Heart left ventricle (tissue), 16 donors: ENCODE measurements at regions of chr19 and their contacts with region 1.

Region 1: DNA sequence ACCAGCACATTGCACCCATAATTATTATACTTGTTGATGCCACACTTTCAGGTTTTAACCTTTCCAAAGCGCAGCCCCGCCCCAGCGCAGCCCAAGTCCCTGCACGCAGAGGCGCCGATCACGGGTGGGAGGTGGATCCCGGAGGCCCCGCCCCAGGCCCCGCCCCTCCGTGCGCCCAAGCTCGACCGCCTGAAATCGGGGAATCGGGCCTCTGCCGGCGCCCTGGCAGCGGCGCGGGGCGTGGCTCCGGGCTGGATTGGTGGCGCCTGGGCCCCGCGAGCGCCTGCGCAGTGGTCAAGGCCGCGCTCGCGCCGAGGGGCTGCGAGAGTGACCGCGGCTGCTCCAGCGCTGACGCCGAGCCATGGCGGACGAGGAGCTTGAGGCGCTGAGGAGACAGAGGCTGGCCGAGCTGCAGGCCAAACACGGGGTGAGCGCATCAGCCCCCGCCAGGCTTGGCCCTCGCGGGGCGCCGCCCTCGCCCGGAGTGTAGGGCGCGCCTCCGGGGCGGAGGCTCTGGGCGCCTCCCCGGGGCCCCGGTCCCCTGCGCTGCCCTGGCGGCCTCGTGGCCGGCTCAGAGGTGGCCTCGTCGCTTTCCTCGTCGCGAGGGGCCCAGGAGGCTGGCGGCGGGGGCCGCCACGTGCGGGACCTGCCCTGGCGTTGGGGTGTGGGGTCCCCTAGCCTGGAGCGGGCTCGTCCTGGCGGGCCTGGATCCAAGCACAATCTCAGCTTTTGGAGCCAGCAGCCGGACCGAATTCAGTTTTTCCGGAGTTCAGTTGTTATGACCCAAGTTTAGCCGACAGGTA is at the start of gene PDCD5:
- DNase-seq: peak; percentile 96 to 98 (median 97)
- ATAC-seq: peak; percentile 96 to 99 (median 98)
- H3K4me3 ChIP-seq: peak within 1 kb of the TSS; percentile 74 to 94 (median 86)
- H3K27ac ChIP-seq: peak within 1 kb of the TSS; percentile 60 to 94 (median 90)
- H3K4me1 ChIP-seq: peaks cover 0 to 18% (median 11%) of the 10 kb centered on the region in 12 donors
- H3K27me3 ChIP-seq: no peaks in the 10 kb centered on the region
- CTCF ChIP-seq: no peak
- POLR2A ChIP-seq: peak in 1 of 2 donors; percentile 90
- total RNA-seq, gene PDCD5: 94.3 to 270 (median 146) TPM

Region 2: DNA sequence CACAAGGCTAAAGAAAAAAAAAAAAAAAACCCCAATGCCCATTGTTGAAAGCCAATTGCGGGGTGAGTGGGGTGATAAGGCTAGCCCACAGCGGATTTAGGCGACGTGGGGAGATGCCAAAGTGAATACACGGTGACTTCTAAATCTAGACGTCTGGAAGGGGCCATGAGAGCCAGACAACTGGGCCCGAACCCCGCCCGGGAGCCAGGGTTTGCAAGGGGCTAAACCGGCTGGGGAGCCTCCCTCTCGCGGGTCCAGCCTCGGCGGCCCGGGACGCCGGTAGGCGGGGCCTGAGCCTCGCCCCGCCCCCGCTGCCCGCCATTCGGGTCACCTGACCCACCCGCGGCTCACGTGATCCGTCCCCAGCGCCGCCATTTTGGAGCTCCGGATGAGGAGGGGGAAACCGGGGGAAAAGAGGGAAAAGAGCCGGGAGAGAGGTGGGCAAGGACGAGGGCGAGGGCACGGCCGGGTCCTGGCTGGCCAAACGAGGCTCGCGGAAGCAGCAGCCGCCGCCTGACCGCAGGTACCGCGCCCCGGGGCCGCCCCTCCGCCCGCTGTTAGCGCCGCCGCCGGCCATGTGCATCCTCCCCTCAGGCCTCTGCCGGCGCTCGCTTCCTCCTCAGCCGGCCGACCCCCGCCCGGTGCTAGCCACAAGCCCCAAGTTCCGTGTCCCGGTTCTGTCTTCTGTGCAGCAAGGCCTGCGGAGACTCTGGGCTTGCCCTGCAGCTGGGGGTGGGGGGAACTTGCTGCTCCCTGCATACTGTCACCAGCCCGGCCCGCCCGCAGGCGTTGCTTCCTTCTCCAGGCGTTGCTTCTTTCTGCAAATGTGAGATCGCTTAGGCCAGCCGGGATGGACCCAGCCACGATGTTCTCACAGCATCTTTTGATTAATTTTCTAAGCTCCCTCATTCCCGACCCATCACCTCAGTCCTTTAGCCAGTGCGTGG is 235.6 kb before region 1 on chr19 and contains the start of gene ZNF507:
- intact Hi-C with region 1: loop called in 3 of 10 experiments (anchors 2 to 5 kb)
- DNase-seq: peak; percentile 83 to 89 (median 86)
- ATAC-seq: peak; percentile 77 to 98 (median 96)
- H3K4me3 ChIP-seq: peak within 1 kb of the TSS; percentile 73 to 93 (median 82)
- H3K27ac ChIP-seq: peak within 1 kb of the TSS; percentile 43 to 89 (median 75)
- H3K4me1 ChIP-seq: peaks cover 0 to 41% (median 29%) of the 10 kb centered on the region in 12 donors
- H3K27me3 ChIP-seq: peaks cover 0 to 73% (median 0%) of the 10 kb centered on the region in 9 donors
- CTCF ChIP-seq: peak in 3 of 12 donors; percentile 4 to 24 (median 19)
- POLR2A ChIP-seq: no peak
- total RNA-seq, gene ZNF507: 9.1 to 27.3 (median 17.3) TPM

Region 3: DNA sequence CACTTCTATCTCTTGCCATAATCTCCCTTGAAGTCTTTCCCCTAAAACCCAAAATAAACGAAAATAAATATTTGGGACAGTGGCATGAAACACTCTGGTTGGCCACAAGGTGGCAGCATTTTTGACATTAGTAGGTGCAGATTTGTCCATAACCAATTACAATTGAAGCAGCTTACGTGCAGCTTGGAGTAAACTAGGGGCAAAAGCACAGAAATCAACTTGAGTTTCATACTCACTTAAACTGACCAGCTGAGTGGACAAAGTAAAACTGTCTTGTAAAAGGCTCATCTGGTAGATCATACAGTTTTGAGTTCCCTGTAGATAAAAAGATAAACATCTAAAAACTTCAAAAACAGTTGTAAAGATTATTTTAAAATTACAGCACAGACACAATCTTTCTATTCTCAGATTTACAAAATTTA is 18.6 kb after region 1 on chr19:
- intact Hi-C with region 1: loop called in 1 of 10 experiments (anchors 1 kb)
- DNase-seq: no peak
- ATAC-seq: peak in 2 of 4 donors; percentile 39 to 52
- H3K4me3 ChIP-seq: no peak overlapping the region
- H3K27ac ChIP-seq: no peak overlapping the region
- H3K4me1 ChIP-seq: no peaks in the 10 kb centered on the region
- H3K27me3 ChIP-seq: no peaks in the 10 kb centered on the region
- CTCF ChIP-seq: peak; percentile 69 to 89 (median 80)
- POLR2A ChIP-seq: no peak

Region 4: DNA sequence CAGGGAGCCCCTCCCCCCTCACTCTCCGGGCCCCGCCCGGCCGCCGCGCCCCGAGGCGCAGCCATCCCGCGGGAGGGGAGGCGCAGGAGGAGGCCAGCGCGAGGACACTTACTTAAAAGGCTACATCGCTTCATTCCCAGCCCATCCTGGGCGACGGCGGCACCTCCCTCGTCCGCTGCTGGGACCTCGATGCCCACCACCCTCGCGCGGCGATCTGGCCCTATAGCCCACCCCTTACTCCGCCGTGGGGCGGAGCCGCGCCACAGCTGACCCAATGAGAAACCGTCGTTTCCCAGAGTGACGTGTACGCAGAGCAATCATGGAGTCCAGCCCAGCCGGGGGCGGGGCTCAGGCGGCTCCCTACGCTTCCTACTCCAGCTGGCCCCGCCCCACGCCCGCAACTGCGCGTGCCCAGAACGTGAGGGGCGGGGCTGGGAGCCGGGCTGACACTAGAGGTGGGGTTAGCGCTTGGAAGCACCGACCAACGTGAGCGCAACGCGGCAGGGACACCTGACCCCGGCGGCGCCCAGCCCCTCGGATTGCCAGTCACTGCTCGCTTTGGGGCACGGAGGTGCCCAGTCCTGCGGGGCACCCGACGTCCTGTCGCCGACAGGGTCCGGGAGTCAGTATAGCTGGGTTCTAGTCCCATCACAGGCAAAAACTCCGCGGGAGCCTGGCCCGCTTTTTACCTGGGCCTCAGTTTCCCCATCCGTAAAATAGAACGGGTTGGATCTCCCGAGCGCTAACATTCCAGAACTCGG is 94.0 kb after region 1 on chr19 and contains the start of gene ANKRD27:
- intact Hi-C with region 1: loop called in 1 of 10 experiments (anchors 10 kb)
- DNase-seq: peak; percentile 98 to 99 (median 98)
- ATAC-seq: peak; percentile 94 to 98 (median 96)
- H3K4me3 ChIP-seq: peak within 1 kb of the TSS; percentile 79 to 100 (median 88)
- H3K27ac ChIP-seq: peak within 1 kb of the TSS; percentile 51 to 94 (median 88)
- H3K4me1 ChIP-seq: peaks cover 0 to 62% (median 34%) of the 10 kb centered on the region in 12 donors
- H3K27me3 ChIP-seq: peaks cover 0 to 23% (median 13%) of the 10 kb centered on the region in 9 donors
- CTCF ChIP-seq: peak in 1 of 12 donors; percentile 2
- POLR2A ChIP-seq: peak in 1 of 2 donors; percentile 79
- total RNA-seq, gene ANKRD27: 14.6 to 47.5 (median 23.6) TPM